Caco-2 (cell line): ENCODE measurements at regions of chr3 and their contacts with region 1.

Region 1: DNA sequence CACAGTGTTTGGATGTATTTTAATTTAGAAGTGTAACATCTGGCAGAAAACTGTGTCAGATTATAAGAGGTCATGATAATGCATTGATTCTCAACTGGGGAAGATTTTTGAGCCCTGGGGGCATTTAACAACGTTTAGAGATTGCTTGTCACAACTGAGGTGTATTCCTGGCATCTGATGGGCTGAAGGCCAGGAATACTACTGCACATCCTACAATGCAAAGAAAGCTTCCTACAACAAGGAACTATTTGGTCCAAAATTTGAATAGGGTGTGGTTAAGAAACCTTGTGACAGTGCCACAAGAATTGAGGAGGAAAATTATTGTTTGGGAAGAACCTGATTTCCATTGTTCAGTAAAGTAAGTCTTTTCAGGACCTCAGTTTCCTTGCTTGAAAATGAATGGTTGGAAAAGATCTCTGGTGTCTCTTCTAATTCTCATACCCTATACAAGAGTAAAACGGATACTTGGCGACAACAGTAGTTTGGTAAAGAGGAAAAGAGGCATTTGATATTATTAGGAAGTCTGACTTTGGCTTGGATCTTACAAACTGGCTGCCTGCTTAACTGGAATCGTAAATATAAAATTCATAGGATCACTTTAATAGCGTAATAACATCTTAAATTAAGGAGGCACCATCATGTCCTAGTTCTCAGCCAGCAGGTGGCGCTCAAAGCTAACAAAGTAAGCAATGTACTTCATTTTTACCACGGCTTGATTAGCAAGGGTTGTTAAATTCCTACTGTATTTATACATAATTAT is 4.3 kb downstream of the DAZL start:
- DNase-seq: peak; percentile 46 to 57
- H3K4me3 ChIP-seq: no peak overlapping the region
- H3K4me3 Mint-ChIP-seq: no peak overlapping the region
- H3K27ac Mint-ChIP-seq: no peak overlapping the region
- H3K4me1 ChIP-seq: no peaks in the 10 kb centered on the region
- H3K4me1 Mint-ChIP-seq: no peaks in the 10 kb centered on the region
- H3K27me3 ChIP-seq: no peaks in the 10 kb centered on the region
- H3K27me3 Mint-ChIP-seq: peaks cover 12% of the 10 kb centered on the region
- CTCF ChIP-seq: peak; percentile 63 to 84

Region 2: GRCh38 chr3:16290007-16290826 is 310.7 kb before region 1 on chr3:
- CTCF ChIA-PET with region 1: no interaction called
- POLR2A ChIA-PET with region 1: no interaction called
- intact Hi-C with region 1: loop called (anchors 1 kb)
- DNase-seq: peak in 1 of 2 experiments; percentile 50
- H3K4me3 ChIP-seq: no peak overlapping the region
- H3K4me3 Mint-ChIP-seq: no peak overlapping the region
- H3K27ac Mint-ChIP-seq: no peak overlapping the region
- H3K4me1 ChIP-seq: peaks cover 6% of the 10 kb centered on the region; the same call in 1 of the 2 replicates
- H3K4me1 Mint-ChIP-seq: peaks cover 10% of the 10 kb centered on the region
- H3K27me3 ChIP-seq: no peaks in the 10 kb centered on the region
- H3K27me3 Mint-ChIP-seq: no peaks in the 10 kb centered on the region
- CTCF ChIP-seq: peak; percentile 73 to 77

Region 3: GRCh38 chr3:16849229-16849628 is 248.3 kb after region 1 on chr3:
- CTCF ChIA-PET with region 1: no interaction called
- POLR2A ChIA-PET with region 1: no interaction called
- intact Hi-C with region 1: loop called (anchors 10 kb)
- DNase-seq: no peak
- H3K4me3 ChIP-seq: no peak overlapping the region
- H3K4me3 Mint-ChIP-seq: no peak overlapping the region
- H3K27ac Mint-ChIP-seq: no peak overlapping the region
- H3K4me1 ChIP-seq: no peaks in the 10 kb centered on the region
- H3K4me1 Mint-ChIP-seq: no peaks in the 10 kb centered on the region
- H3K27me3 ChIP-seq: no peaks in the 10 kb centered on the region
- H3K27me3 Mint-ChIP-seq: peaks cover 24% of the 10 kb centered on the region
- CTCF ChIP-seq: no peak

Region 4: DNA sequence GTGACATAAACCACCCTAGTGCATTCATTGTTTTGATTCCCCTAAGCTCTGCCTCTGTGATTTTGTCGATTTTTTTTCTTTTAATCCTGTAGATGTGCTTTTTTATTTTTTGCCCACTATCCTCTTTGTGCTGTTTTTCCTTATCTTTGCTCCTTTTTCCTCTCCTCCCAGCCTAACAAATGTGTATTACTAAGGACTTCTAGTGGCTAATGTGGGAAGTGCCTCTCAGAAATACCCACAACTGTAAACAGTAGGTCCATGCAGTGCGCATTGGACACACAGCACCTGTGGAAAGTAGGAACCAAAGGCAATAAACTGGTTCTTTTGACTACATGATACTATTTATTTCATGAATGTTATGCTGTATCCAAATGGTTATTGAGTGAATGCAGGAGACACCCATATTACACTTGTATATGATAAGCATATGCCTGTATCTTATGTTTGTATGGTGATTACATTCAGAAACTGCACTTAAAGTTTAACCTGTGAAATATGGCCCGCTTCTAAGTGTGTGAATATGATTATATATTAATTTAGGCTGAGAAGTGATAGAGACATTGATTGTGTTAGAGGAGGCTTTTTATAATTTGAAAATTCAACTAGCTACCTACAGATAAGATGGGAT is 431.6 kb after region 1 on chr3:
- CTCF ChIA-PET with region 1: no interaction called
- POLR2A ChIA-PET with region 1: no interaction called
- intact Hi-C with region 1: loop called (anchors 1 kb)
- DNase-seq: peak in 1 of 2 experiments; percentile 31
- H3K4me3 ChIP-seq: no peak overlapping the region
- H3K4me3 Mint-ChIP-seq: no peak overlapping the region
- H3K27ac Mint-ChIP-seq: no peak overlapping the region
- H3K4me1 ChIP-seq: no peaks in the 10 kb centered on the region
- H3K4me1 Mint-ChIP-seq: no peaks in the 10 kb centered on the region
- H3K27me3 ChIP-seq: no peaks in the 10 kb centered on the region
- H3K27me3 Mint-ChIP-seq: peaks cover 14% of the 10 kb centered on the region
- CTCF ChIP-seq: peak; percentile 46 to 77

Region 5: DNA sequence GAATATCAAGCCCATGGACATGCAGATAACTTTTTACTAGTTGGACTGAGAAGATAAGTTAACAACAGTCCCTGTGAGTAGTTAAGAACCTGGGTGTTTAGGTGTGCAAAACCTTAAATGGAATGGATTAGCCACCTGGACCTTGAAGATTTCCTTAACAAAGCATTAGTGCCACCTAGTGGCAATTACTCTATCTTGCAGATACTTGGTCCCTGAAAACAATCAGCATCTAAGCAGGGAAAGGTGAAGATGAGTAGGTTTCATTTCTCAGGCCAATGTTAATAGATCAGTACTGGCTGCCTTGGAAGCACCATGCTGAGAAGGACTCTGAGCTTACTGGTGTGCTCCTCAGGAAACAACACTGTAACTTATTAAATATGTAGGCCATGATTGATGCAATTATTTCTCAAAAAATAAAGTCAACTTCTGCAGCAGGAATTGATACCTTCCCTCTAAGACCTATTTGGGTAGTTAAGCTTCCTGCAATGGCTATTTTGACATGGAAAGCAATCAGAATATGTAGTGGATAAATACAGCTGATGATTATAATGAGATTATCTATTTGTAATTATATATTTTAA is 812.1 kb after region 1 on chr3:
- CTCF ChIA-PET with region 1: no interaction called
- POLR2A ChIA-PET with region 1: no interaction called
- intact Hi-C with region 1: loop called (anchors 5 kb)
- DNase-seq: peak in 1 of 2 experiments; percentile 51
- H3K4me3 ChIP-seq: no peak overlapping the region
- H3K4me3 Mint-ChIP-seq: no peak overlapping the region
- H3K27ac Mint-ChIP-seq: no peak overlapping the region
- H3K4me1 ChIP-seq: no peaks in the 10 kb centered on the region
- H3K4me1 Mint-ChIP-seq: no peaks in the 10 kb centered on the region
- H3K27me3 ChIP-seq: no peaks in the 10 kb centered on the region
- H3K27me3 Mint-ChIP-seq: no peaks in the 10 kb centered on the region
- CTCF ChIP-seq: peak; percentile 62 to 71